Common myeloid progenitor, CD34-positive (primary cell): ENCODE measurements at regions of chr3 and their contacts with region 1.

Region 1: GRCh38 chr3:119352849-119353502 is 58.8 kb downstream of the ARHGAP31 start:
- DNase-seq: peak; percentile 72 to 87 (median 84)
- H3K4me3 ChIP-seq: no peak overlapping the region
- H3K27ac ChIP-seq: no peak overlapping the region
- H3K4me1 ChIP-seq: peaks cover 6 to 28% (median 21%) of the 10 kb centered on the region in 4 experiments
- H3K27me3 ChIP-seq: no peaks in the 10 kb centered on the region

Region 2: DNA sequence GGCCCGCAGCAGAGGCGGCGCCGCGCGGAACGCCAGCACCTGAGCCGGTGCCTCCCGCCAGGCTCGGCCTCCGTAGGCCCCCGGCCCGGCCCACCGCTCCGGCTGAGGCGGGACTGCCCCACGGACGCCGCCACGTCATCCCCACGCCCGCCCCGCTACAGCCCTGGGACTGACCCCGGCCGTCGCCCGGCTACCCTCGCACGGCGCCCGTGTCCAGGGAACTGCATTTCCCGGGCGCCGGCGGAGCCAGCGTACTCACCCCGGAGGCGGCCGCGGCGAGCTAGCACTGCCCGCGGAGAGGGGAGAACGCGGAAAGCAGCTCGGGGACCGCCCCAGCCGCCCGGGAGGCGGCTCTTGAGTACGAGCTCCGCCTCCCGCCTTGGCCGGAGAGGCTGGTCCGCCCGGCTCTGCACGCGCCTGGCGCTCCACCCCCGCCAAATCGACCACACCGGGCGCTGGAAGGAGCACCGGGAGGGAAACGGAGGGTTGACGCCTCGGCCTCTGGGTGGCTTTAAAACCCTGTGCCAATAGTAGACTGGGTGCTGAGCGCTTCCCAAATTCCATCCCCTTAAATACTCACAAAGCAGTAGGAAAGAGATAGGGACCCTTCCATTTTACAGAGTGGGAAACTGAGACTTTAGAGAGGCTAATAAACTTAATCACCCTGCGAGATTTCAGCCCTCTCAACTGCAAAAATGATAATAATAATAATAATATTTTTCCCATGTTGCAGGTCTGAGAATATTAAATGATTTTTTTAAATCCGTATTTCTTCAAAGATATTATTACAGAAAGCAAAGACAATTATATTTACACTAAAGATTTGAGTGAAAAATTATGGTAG is 112.2 kb before region 1 on chr3 and contains the start of gene B4GALT4:
- CTCF ChIA-PET with region 1: interaction called, 14 read pairs
- POLR2A ChIA-PET with region 1: interaction called, 5 read pairs
- DNase-seq: peak; percentile 72 to 79 (median 76)
- H3K4me3 ChIP-seq: peak within 1 kb of the TSS; percentile 55 to 91 (median 78)
- H3K27ac ChIP-seq: peak within 1 kb of the TSS; percentile 58 to 82
- H3K4me1 ChIP-seq: peaks cover 17 to 34% (median 26%) of the 10 kb centered on the region in 4 experiments
- H3K27me3 ChIP-seq: no peaks in the 10 kb centered on the region

Region 3: GRCh38 chr3:119276680-119277079 is 76.3 kb before region 1 on chr3:
- CTCF ChIA-PET with region 1: interaction called, 55 read pairs
- POLR2A ChIA-PET with region 1: no interaction called
- DNase-seq: no peak
- H3K4me3 ChIP-seq: no peak overlapping the region
- H3K27ac ChIP-seq: no peak overlapping the region
- H3K4me1 ChIP-seq: no peaks in the 10 kb centered on the region
- H3K27me3 ChIP-seq: no peaks in the 10 kb centered on the region

Region 4: DNA sequence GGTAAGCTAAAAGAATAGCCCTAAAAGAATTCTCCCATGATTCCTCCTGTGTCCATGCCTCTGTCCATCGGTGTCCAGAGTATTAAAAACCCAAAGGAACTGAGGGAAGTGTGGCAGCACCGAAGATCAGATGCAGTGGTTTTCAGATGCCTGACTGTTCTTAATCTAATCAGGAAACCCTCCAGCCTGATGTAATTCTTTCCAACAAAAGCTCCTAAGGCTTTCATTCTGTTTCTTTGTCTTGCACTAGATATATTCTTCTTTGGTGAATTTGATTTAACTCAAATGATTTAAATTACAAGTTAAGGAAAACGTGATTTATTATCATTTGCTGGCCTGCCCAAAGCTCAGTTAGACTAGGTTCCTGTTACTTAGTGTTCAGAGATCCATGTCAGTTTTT is 12.4 kb after region 1 on chr3:
- CTCF ChIA-PET with region 1: interaction called, 10 read pairs
- POLR2A ChIA-PET with region 1: no interaction called
- DNase-seq: no peak
- H3K4me3 ChIP-seq: no peak overlapping the region
- H3K27ac ChIP-seq: no peak overlapping the region
- H3K4me1 ChIP-seq: no peaks in the 10 kb centered on the region
- H3K27me3 ChIP-seq: no peaks in the 10 kb centered on the region